Ovary (tissue), 10 donors: ENCODE measurements at regions of chr3 and their contacts with region 1.

Region 1: GRCh38 chr3:38346587-38347410 is at the start of gene XYLB:
- DNase-seq: peak; percentile 76 to 89 (median 82)
- H3K4me3 ChIP-seq: peak within 1 kb of the TSS; percentile 58
- H3K27ac ChIP-seq: no peak within 1 kb of the TSS
- H3K4me1 ChIP-seq: peaks cover 6% of the 10 kb centered on the region
- H3K27me3 ChIP-seq: no peaks in the 10 kb centered on the region
- CTCF ChIP-seq: peak; percentile 76 to 92 (median 85)
- EP300 ChIP-seq: no peak
- POLR2A ChIP-seq: no peak
- total RNA-seq, gene XYLB: 1.4 to 7.0 (median 5.6) TPM

Region 2: GRCh38 chr3:38117748-38118420 is 228.9 kb before region 1 on chr3:
- intact Hi-C with region 1: loop called in 1 of 4 experiments (anchors 10 kb)
- DNase-seq: peak in 3 of 5 donors; percentile 44 to 67 (median 46)
- H3K4me3 ChIP-seq: no peak overlapping the region
- H3K27ac ChIP-seq: no peak overlapping the region
- H3K4me1 ChIP-seq: no peaks in the 10 kb centered on the region
- H3K27me3 ChIP-seq: no peaks in the 10 kb centered on the region
- CTCF ChIP-seq: peak in 1 of 3 donors; percentile 26
- EP300 ChIP-seq: no peak
- POLR2A ChIP-seq: no peak

Region 3: GRCh38 chr3:38136777-38137614 is 209.8 kb before region 1 on chr3 and contains the start of gene ACAA1:
- intact Hi-C with region 1: loop called in 1 of 4 experiments (anchors 5 kb)
- DNase-seq: peak; percentile 99 to 100 (median 100)
- H3K4me3 ChIP-seq: peak within 1 kb of the TSS; percentile 96
- H3K27ac ChIP-seq: peak within 1 kb of the TSS; percentile 71 to 94
- H3K4me1 ChIP-seq: peaks cover 21% of the 10 kb centered on the region
- H3K27me3 ChIP-seq: no peaks in the 10 kb centered on the region
- CTCF ChIP-seq: peak in 1 of 3 donors; percentile 15
- EP300 ChIP-seq: no peak
- POLR2A ChIP-seq: peak; percentile 88
- total RNA-seq, gene ACAA1: 27.1 to 50.4 (median 44.9) TPM

Region 4: DNA sequence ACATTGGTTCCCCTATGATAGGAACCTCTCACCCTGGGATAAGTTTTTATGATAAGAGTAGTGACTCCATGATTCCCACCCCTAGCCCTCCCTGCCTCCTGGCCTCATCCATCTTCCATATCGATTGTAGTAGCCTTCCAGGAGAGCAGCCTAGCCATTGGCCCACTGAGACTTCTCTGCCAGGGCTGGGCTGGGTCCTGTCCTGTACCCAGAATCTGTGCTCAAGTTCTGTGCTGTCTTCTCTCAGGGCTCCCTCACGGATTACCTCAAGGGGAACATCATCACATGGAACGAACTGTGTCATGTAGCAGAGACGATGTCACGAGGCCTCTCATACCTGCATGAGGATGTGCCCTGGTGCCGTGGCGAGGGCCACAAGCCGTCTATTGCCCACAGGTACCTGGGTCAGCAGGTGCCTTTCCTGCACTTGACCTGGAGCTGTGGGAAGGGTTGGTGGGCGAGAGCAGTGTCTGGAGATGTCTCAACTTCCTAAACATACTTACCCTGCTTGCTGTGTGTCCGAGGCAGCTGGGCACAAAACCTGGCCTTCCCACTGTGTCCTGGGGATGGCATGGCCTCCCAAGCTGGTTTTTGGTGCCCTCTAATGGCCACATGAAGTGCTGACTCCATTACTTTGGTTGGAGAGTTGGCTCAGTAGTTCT is 132.8 kb after region 1 on chr3:
- intact Hi-C with region 1: loop called (anchors 5 kb)
- DNase-seq: peak; percentile 57 to 69 (median 64)
- H3K4me3 ChIP-seq: no peak overlapping the region
- H3K27ac ChIP-seq: no peak overlapping the region
- H3K4me1 ChIP-seq: peaks cover 2% of the 10 kb centered on the region
- H3K27me3 ChIP-seq: no peaks in the 10 kb centered on the region
- CTCF ChIP-seq: peak; percentile 67 to 79 (median 69)
- EP300 ChIP-seq: no peak
- POLR2A ChIP-seq: no peak